Left ventricle myocardium superior (tissue), 1 donor: ENCODE measurements at regions of chr16 and their contacts with region 1.

Region 1: DNA sequence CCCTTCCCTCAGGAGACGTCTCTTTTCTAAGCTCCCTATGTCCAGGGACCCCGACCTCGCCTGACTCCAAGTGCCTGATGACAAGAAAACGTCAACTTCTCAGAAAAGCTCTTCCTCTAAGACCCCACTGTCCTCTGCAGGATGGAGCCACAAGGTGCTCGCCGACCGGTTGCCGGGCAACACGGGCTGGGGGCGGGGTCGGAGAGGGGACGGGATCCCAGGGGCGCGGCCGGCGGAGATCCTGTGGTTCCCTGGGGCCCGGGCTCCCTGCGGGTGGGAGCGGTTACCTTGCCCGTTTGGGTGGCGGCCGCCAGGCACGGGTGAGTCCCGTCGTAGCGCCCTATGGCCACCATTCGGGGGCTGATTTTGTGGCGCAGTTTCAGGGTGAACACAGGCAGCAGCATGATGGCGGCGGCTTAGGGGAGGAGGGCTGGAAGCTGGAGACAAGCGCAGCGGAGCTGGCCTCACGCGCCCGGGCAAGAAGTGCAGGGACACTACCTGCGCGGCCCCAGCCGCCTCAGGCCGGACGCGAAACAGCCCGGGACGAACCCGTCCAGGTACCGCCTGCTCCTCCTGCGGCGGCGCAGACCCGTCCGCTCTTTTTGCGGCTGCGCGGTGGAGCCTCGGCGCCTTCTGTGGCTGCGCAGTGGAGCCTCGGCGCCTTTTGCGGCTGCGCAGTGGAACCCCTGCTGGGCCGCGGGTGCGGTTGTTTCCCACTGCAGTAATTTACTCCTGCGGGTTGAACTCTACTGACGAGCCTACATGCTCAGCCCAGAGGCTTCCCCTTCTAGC is at the start of gene BBS2:
- DNase-seq: peak; percentile 96
- ATAC-seq: peak; percentile 99
- total RNA-seq, gene BBS2: 45.0 TPM

Region 2: DNA sequence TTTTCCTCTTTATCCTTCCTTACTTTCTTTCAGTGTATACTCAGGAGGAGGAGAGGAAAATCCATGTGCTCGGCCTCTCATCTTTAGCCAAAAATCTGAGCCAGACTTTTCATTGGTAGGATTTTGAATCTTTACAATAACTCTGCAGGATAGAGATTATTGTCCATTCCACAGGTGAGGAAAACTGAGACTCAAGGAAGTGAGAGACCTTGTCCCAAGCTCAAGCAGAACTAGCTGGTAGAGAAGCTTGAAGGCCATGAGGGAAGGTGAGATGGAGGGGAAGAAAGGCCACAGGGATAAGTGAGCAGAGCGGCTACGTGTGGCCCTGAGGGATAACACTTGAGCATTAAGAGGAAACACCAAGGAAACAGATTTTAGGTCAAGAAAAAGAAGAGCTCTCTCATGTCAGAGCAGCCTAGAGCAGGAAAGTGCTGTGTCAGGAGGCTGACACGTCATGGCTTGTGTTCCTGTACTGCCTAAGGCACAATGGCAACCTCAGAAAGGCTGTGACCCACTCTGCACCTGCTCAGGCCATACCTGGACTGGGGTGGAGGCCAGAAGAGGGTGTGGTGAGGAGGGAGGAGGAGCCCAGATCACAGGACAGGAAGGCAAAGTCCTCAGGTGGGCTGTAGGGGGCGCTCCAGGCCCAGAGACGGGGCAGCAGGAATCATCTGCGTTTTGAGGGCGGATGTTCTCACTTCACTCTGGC is 57.1 kb after region 1 on chr16:
- intact Hi-C with region 1: no loop called
- DNase-seq: peak; percentile 76
- ATAC-seq: peak; percentile 88

Region 3: DNA sequence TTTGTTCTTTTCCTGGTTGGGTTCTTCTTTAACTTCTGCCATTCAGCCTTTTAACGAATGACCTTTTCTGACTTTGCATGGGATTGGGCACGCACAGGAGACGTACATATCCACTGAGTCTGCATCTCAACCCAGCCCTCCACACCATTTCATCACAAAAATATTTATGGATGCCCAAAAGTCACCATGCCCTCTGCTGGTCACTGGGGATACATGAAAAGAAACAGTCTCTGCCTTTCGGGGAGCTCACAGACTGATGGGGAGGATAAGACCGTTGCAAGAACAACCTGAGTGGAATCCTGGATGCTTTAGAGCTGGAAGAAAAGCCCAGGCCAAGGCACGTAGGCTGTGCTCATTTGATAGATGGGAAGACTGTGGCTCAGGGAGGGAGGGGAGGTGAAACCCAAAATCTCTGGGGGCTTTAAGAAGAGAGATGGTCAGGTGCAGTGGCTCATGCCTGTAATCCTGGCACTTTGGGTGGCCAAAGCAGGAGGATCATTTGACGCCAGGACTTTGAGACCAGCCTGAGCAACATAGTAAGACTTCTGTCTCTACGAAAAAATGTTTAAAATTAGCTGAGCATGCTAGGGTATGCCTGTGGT is 80.8 kb after region 1 on chr16:
- intact Hi-C with region 1: loop called (anchors 5 kb)
- DNase-seq: no peak
- ATAC-seq: peak; percentile 29

Region 4: DNA sequence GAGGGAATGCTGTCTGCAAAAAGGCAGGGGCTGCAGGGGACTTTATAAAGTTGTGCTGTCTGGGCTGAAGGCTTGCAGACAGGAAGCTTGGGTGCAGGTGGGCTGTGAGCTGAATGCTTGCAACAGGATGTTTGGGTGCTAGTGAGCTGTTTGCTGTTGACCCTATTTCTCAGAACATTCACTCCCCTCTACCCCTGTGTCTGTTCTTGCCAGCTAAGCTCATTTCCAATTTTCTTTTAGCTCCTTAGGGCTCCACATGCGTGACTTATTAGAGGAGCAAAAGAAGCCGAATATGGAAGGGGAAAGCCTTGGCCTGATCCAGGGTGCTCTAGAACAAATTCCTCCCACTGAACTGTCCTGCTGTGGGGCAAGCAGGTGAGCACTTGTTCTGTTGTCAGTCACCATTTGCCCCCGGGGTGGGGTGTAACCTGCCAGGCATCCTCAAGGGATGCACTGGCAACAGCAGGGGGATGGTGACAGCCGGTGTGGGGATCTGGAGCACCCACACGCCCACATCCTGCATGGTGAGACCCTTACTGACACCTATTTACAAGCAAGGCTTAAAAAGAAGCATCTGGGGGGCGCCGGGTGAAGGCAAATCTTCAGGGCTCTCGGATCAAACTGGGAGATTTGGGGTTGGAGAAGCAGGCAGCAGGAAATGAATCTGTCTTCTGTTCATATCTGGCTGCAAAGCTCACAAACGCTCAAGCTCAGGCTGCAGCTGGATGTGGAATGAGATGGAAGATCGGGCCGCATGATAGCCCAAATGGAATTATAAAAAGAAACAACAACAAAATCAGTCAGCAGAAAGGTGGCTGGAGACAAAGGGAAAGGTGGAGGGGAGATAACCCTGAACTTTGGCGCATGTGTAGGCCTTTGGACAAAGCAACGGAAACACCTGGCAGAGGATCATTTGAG is 189.1 kb after region 1 on chr16:
- intact Hi-C with region 1: loop called (anchors 10 kb)
- DNase-seq: no peak
- ATAC-seq: no peak